Activated B cell treated with CpG ODN at 0.5 μM for 24 hours (primary cell): ENCODE measurements at regions of chr1 and their contacts with region 1.

Region 1: GRCh38 chr1:201709564-201710295 is 119.2 kb upstream of the IPO9 start:
- DNase-seq: peak; percentile 60
- ATAC-seq: peak; percentile 97
- H3K4me3 Mint-ChIP-seq: no peak overlapping the region
- H3K27ac Mint-ChIP-seq: no peak overlapping the region
- H3K4me1 Mint-ChIP-seq: no peaks in the 10 kb centered on the region
- H3K27me3 Mint-ChIP-seq: peaks cover 7% of the 10 kb centered on the region
- CTCF ChIP-seq: no peak

Region 2: GRCh38 chr1:201447911-201448871 is 261.5 kb before region 1 on chr1:
- CTCF ChIA-PET with region 1: no interaction called
- POLR2A ChIA-PET with region 1: no interaction called
- intact Hi-C with region 1: loop called (anchors 10 kb)
- DNase-seq: peak; percentile 30
- ATAC-seq: peak; percentile 89
- H3K4me3 Mint-ChIP-seq: no peak overlapping the region
- H3K27ac Mint-ChIP-seq: no peak overlapping the region
- H3K4me1 Mint-ChIP-seq: peaks cover 9% of the 10 kb centered on the region
- H3K27me3 Mint-ChIP-seq: peaks cover 12% of the 10 kb centered on the region
- CTCF ChIP-seq: no peak

Region 3: DNA sequence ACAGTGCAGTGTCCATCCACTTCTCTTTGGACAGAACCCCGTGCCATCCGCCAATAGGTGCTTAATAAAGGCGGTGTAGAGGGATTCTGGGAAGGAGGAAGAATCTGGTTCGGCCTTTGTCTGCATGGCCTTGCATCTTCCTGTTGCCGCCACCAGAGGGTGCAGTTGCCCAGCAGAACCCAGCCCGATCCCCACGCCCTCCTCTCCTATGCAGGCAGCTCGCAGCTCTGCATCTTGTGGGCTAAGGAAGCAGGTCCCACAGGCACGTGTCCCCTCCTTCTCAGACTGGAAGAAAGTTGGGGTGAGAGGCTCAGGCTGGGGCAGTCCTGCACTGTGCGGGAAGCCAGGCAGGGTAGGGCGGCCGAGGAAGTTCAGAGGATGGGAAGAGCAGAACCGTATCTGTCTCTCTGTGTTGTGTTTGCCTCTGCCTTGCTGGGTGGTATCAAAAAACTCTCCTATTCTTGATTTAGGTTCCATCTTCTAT is 150.0 kb before region 1 on chr1:
- CTCF ChIA-PET with region 1: interaction called, 5 read pairs
- POLR2A ChIA-PET with region 1: no interaction called
- intact Hi-C with region 1: loop called (anchors 1 kb)
- DNase-seq: peak; percentile 57
- ATAC-seq: peak; percentile 88
- H3K4me3 Mint-ChIP-seq: no peak overlapping the region
- H3K27ac Mint-ChIP-seq: no peak overlapping the region
- H3K4me1 Mint-ChIP-seq: peaks cover 4% of the 10 kb centered on the region
- H3K27me3 Mint-ChIP-seq: no peaks in the 10 kb centered on the region
- CTCF ChIP-seq: peak; percentile 34

Region 4: GRCh38 chr1:201792534-201793305 is 83.0 kb after region 1 on chr1:
- CTCF ChIA-PET with region 1: interaction called, 189 read pairs
- POLR2A ChIA-PET with region 1: interaction called, 3 read pairs
- intact Hi-C with region 1: loop called (anchors 1 kb)
- DNase-seq: peak; percentile 24
- ATAC-seq: peak; percentile 54
- H3K4me3 Mint-ChIP-seq: no peak overlapping the region
- H3K27ac Mint-ChIP-seq: no peak overlapping the region
- H3K4me1 Mint-ChIP-seq: peaks cover 3% of the 10 kb centered on the region
- H3K27me3 Mint-ChIP-seq: no peaks in the 10 kb centered on the region
- CTCF ChIP-seq: peak; percentile 63